ENCODE measurements at regions of chr2 and their contacts with region 1.

Region 1: GRCh38 chr2:11465497-11466406 is at the start of gene E2F6:
- DNase-seq: peak; percentile 85
- H3K4me3 Mint-ChIP-seq: peak within 1 kb of the TSS; percentile 93
- H3K27ac Mint-ChIP-seq: peak within 1 kb of the TSS; percentile 81
- H3K4me1 Mint-ChIP-seq: peaks cover 32% of the 10 kb centered on the region
- H3K27me3 Mint-ChIP-seq: no peaks in the 10 kb centered on the region
- total RNA-seq, gene E2F6: 5.9 to 6.6 TPM

Region 2: DNA sequence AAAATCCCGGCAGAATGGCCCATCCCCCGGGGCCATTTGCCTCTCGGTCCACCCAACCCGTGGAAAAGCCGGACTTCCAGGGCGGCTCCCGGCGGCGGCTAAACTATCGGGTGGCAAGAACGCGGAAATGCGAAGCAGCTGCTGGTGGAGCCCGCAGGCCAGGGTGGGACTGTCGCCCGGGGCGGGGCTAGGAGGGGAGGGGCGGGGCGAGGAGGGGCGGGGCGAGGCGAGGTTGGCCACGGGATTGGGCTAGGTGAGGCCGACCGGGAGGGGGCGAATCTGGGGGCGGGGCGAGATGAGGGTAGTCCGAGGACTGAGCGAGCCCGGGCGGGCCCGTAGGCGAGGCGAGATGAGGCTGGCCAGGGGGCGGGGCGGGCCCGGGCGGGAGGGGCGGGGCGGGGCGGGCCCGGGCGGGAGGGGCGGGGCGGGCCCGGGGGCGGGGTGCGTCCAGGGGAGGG is 310.8 kb before region 1 on chr2:
- CTCF ChIA-PET with region 1: no interaction called
- POLR2A ChIA-PET with region 1: interaction called, 12 read pairs
- DNase-seq: peak; percentile 98
- H3K4me3 Mint-ChIP-seq: peak overlapping the region; percentile 74
- H3K27ac Mint-ChIP-seq: peak overlapping the region; percentile 80
- H3K4me1 Mint-ChIP-seq: peaks cover 21% of the 10 kb centered on the region
- H3K27me3 Mint-ChIP-seq: peaks cover 14% of the 10 kb centered on the region

Region 3: GRCh38 chr2:11477994-11478393 is 12.2 kb after region 1 on chr2:
- CTCF ChIA-PET with region 1: interaction called, 12 read pairs
- POLR2A ChIA-PET with region 1: no interaction called
- DNase-seq: peak; percentile 83
- H3K4me3 Mint-ChIP-seq: no peak overlapping the region
- H3K27ac Mint-ChIP-seq: no peak overlapping the region
- H3K4me1 Mint-ChIP-seq: peaks cover under 1% of the 10 kb centered on the region
- H3K27me3 Mint-ChIP-seq: peaks cover 33% of the 10 kb centered on the region

Measured in activated CD4-positive, alpha-beta memory T cell treated with anti-CD3 and anti-CD28 coated beads, Interleukin-2, amount 10 ng/mL, durations not matched to agents 7 days and 5 days (primary cell).